WTC11 (cell line): ENCODE measurements at regions of chr2 and their contacts with region 1.

Region 1: GRCh38 chr2:151409601-151410484 is at the start of gene RIF1:
- DNase-seq: peak; percentile 95
- ATAC-seq: peak; percentile 94
- H3K4me3 Mint-ChIP-seq: peak within 1 kb of the TSS; percentile 97
- H3K27ac Mint-ChIP-seq: peak within 1 kb of the TSS; percentile 98
- H3K4me1 Mint-ChIP-seq: peaks cover 23% of the 10 kb centered on the region
- H3K27me3 Mint-ChIP-seq: no peaks in the 10 kb centered on the region; the same call in 1 of the 2 replicates
- CTCF ChIP-seq: no peak; the same call in 1 of the 2 replicates
- total RNA-seq, gene RIF1: 73.9 to 96.9 TPM (median 82.9 TPM) in 3 replicates

Region 2: DNA sequence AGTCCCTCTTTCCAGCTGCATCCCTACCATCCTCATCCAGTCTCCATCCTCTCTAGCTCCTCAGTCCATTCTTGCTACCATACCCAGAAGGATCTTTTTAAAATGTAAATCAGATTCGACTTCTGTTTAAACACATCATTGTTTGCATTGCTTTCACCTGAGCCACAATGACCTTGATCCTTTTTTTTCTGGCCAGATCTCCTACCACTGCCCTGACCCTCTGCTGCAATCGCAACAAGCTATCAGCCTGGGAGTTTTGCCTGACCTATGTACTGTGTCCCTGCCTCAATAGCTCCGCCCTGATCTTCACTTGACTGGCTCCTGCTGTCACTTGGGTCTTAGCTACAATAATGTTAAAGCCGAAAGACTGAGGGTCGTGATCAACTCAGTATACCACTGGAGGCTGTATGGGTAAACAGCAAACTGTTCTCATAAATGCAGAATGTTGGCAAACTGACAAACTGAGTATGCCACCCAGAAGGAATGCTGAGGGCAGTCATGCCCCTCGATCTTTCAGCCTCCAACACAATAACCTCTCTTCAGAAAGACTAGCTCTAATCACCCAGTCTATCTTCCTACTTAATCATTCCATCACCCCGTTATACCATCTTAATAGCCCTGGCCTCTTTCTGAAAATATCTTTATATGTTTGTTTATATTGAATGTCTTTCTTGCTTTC is 145.5 kb before region 1 on chr2:
- CTCF ChIA-PET with region 1: interaction called, 12 read pairs
- POLR2A ChIA-PET with region 1: interaction called, 3 read pairs
- DNase-seq: no peak
- ATAC-seq: peak; percentile 50
- H3K4me3 Mint-ChIP-seq: no peak overlapping the region
- H3K27ac Mint-ChIP-seq: no peak overlapping the region; the same call in 1 of the 2 replicates
- H3K4me1 Mint-ChIP-seq: peaks cover 36% of the 10 kb centered on the region
- H3K27me3 Mint-ChIP-seq: no peaks in the 10 kb centered on the region; the same call in 1 of the 2 replicates
- CTCF ChIP-seq: no peak

Region 3: DNA sequence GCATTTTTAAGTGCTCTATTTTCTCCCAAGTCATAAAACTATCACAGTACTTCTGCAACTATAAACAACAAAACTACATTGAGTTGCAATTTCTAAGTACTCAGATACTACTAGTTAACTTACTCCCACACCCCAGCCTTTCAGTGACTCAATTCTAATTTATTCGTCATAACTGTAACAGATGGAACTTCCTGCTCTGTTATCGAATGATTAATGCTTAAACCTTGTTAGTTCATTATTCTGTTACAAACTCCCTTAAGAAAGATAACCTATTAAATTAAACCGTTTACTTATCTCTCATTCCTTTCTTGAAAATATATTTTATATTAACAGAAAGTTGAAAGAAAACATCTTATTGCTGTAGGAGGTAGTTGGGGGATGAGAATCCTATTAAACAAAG is 35.4 kb before region 1 on chr2:
- CTCF ChIA-PET with region 1: no interaction called
- POLR2A ChIA-PET with region 1: no interaction called
- DNase-seq: no peak
- ATAC-seq: no peak
- H3K4me3 Mint-ChIP-seq: no peak overlapping the region
- H3K27ac Mint-ChIP-seq: no peak overlapping the region
- H3K4me1 Mint-ChIP-seq: peaks cover 9% of the 10 kb centered on the region
- H3K27me3 Mint-ChIP-seq: no peaks in the 10 kb centered on the region
- CTCF ChIP-seq: no peak